Right ventricle myocardium inferior (tissue), 1 donor: ENCODE measurements at regions of chr19 and their contacts with region 1.

Region 1: GRCh38 chr19:49085020-49085867 is at the start of gene SNRNP70:
- DNase-seq: peak; percentile 100
- ATAC-seq: peak; percentile 99
- total RNA-seq, gene SNRNP70: 110 TPM

Region 2: GRCh38 chr19:48170038-48170812 is 915.0 kb before region 1 on chr19 and contains the starts of genes LIG1 and ZSWIM9:
- intact Hi-C with region 1: loop called (anchors 10 kb)
- DNase-seq: peak; percentile 96
- ATAC-seq: peak; percentile 97
- total RNA-seq, gene LIG1: 3.3 TPM
- total RNA-seq, gene ZSWIM9: 6.6 TPM

Region 3: DNA sequence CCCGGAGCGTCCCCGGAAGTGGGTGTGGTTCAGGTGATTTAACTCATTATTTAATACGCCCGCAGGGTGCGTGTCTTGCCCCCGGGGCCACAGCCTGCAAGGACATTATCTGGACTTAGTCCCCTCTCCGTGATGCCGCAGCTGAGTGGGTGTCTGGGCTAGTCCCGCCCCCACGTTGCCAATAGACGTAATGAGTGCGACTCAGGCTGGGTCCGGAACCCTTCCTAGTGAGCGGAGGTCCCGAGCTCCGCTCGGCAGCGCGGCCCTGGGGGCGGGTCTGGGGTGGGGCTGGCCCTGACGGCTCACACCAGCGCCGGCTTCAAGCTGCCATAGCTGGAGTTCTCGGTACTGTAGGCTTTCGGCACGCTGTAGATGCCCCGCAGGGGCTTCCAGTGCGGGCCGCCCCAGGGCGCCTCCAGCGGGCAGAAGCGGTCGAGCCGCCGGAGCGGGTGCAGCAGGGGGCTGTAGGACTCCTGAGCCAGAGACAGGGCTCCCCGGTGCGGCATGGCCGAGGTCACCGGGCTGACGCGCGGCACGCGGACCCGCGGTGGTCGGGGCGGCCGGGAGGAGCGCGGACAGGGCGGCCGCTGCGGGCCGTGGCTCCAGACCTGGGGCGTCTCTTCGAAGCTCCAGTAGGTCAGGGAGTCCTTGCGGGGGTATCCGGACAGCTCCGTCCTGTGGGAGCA is 67.4 kb before region 1 on chr19:
- intact Hi-C with region 1: loop called (anchors 5 kb)
- DNase-seq: no peak
- ATAC-seq: peak; percentile 57

Region 4: GRCh38 chr19:49106648-49107135 is 21.4 kb after region 1 on chr19:
- intact Hi-C with region 1: no loop called
- DNase-seq: peak; percentile 83
- ATAC-seq: no peak

Region 5: DNA sequence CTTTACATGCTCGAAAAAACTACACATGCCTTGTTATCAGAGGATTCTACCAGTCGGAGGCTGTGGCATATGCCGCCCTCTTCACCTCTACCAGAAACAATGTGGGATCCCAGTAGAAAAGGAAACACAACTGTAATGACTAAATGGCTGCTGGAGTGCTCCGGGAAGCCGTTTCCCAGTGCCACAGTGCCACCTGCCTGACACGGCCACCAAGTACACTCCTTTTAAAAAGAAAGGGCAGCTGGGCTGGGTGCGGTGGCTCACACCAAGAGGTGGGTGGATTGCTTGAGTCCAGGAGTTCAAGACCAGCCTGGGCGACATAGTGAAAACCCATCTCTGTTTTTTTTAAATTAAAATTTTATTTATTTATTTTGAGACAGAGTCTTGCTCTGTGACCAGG is 139.6 kb after region 1 on chr19:
- intact Hi-C with region 1: no loop called
- DNase-seq: peak; percentile 56
- ATAC-seq: peak; percentile 80